AG04450 (cell line): ENCODE measurements at regions of chr9 and their contacts with region 1.

Region 1: DNA sequence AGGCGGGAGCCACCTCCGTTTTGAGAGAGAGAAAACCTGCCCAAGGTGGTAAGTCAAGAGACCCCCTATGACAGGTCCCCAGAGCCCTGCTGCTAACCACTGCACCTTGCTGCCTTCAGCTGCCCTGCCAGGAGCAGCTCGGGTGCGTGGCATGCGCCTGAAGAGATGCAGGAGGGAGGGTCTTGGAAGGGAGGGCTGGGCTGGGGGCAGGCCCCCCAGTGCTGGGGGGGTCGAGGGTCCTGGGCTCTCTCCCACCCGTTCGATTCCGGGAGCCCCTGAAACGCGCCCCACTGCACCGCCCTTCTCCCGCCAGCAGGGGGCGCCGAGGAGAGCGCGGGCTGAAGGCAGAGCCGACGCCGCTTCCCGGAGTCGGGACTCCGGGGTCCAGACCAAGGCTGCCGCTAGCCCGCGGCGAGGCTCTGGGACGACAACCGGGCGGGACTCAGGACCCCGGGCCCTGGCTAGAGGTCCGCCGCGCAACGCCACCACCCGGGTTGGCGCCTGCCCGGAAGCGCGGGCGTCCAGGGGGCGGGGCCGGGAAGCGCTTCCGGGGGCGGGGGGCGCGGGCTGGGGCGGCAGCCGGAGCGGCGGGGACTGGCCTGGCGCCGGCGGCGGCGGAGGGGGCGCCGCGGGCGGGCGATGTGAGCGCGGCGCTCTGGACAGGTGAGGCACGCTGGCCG is at the start of gene ZBTB34:
- DNase-seq: no peak
- H3K4me3 ChIP-seq: peak within 1 kb of the TSS; percentile 90
- H3K27ac ChIP-seq: peak within 1 kb of the TSS; percentile 75
- H3K27me3 ChIP-seq: peaks cover 27% of the 10 kb centered on the region
- CTCF ChIP-seq: peak; percentile 96
- polyA plus RNA-seq, gene ZBTB34: 8.0 and 9.4 TPM in 2 replicates

Region 2: DNA sequence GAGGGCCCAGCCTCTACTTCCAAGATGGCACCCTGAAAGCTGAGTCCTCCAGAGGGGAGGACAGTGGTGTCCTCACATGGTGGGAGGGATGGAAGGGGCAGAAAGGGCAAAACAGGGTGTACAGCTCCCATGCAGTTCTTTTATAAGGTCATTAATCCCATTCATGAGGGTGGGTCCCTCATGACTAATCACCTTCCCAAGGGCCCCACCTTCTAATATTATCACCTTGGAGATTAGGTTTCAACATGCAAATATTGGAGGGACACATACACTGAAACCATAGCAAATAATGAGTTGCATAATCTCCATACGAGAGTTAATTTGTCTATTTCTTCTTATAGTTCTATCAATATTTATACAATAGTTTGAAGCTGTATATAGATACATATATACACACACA is 61.2 kb before region 1 on chr9:
- CTCF ChIA-PET with region 1: no interaction called
- POLR2A ChIA-PET with region 1: no interaction called
- DNase-seq: no peak
- H3K4me3 ChIP-seq: no peak overlapping the region
- H3K27ac ChIP-seq: no peak overlapping the region
- H3K27me3 ChIP-seq: peaks cover 5% of the 10 kb centered on the region
- CTCF ChIP-seq: no peak

Region 3: GRCh38 chr9:126830827-126831226 is 29.4 kb before region 1 on chr9:
- CTCF ChIA-PET with region 1: interaction called, 12 read pairs
- POLR2A ChIA-PET with region 1: no interaction called
- DNase-seq: no peak
- H3K4me3 ChIP-seq: no peak overlapping the region
- H3K27ac ChIP-seq: no peak overlapping the region
- H3K27me3 ChIP-seq: no peaks in the 10 kb centered on the region
- CTCF ChIP-seq: no peak

Region 4: DNA sequence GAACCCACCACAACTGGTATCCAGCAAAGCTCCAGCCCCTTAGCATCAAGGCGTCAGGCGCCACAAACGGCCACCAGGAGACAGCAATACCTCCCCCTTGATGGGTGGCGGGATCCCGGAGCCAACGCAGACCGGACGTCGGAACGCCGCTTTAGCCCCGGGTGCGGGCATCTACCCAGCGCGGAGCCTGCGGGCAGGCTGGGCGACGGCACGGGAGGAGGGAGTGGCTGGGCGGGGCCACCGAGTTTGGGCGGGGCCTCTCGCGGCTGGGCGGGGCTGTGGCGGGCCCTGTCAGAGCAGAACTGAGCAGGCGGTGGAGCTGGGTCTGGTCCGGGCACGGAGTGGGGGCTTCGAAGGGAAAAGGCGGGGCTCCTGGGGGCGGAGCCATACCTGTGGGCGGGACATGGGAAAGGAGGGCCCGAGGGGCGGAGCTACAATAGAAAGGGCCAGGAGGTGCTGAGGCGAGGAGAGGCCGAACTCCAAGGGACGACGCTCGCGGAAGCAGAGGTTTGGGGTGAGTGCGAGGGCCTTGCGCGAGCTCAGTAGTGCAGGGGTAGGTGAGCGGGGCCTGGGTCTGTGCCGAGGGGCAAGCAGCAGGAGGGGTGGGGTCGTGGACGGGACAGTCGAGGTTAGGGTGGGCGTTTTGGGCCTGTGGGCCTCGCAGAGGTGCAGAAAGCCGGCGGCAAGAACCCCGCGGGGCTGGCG is 364.1 kb after region 1 on chr9:
- CTCF ChIA-PET with region 1: no interaction called
- POLR2A ChIA-PET with region 1: no interaction called
- DNase-seq: no peak
- H3K4me3 ChIP-seq: peak overlapping the region; percentile 68
- H3K27ac ChIP-seq: no peak overlapping the region
- H3K27me3 ChIP-seq: peaks cover 19% of the 10 kb centered on the region
- CTCF ChIP-seq: no peak